OCI-LY7 (cell line): ENCODE measurements at regions of chr13 and their contacts with region 1.

Region 1: GRCh38 chr13:77274126-77274525 is 52.8 kb downstream of the MYCBP2 start:
- DNase-seq: no peak
- H3K4me3 ChIP-seq: no peak overlapping the region
- H3K27ac ChIP-seq: no peak overlapping the region
- H3K4me1 ChIP-seq: no peaks in the 10 kb centered on the region
- CTCF ChIP-seq: peak; percentile 61

Region 2: GRCh38 chr13:77262198-77262597 is 11.9 kb before region 1 on chr13:
- CTCF ChIA-PET with region 1: no interaction called
- POLR2A ChIA-PET with region 1: interaction called, 12 read pairs
- intact Hi-C with region 1: no loop called
- DNase-seq: no peak
- H3K4me3 ChIP-seq: no peak overlapping the region
- H3K27ac ChIP-seq: no peak overlapping the region
- H3K4me1 ChIP-seq: no peaks in the 10 kb centered on the region
- CTCF ChIP-seq: no peak

Region 3: DNA sequence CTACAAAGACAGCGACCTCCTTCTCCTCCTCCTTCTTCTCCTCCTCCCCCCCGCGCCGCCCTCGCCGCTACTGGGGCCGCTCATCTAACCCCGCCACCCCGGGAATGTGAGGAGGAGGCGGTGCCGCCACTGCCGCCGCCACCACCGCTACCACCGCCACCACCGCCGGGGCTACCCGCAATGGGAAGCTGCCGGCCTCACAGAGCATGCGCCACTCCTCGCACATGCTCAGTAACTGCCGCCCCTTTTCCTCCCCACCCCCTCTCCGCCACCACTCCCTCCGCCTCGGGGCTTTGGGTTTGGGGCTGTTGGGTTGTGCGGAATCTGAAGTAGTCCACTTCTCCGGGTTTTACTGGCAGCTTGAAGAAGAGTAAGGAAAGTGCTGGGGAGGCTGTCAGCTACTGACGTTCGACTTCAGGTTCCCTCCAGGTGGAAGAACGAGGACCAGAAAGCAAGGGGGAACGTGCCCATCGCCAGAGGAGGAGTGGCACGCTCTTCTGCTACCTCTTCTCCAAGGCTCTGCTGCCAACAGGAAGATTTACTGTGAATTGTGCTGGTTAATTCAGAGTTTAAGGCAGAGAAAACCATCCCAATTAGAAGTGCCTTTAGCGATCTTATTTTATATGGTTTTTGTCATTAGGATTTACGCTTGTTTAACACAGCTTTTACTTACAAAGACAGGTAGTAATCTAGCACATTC is 52.9 kb after region 1 on chr13 and contains the start of gene MYCBP2:
- CTCF ChIA-PET with region 1: no interaction called
- POLR2A ChIA-PET with region 1: no interaction called
- intact Hi-C with region 1: no loop called
- DNase-seq: peak; percentile 98
- H3K4me3 ChIP-seq: peak within 1 kb of the TSS; percentile 89
- H3K27ac ChIP-seq: peak within 1 kb of the TSS; percentile 97
- H3K4me1 ChIP-seq: peaks cover 58% of the 10 kb centered on the region
- CTCF ChIP-seq: no peak
- total RNA-seq, gene MYCBP2: 121 and 148 TPM in 2 replicates